Left colon (tissue), 2 donors: ENCODE measurements at regions of chr2 and their contacts with region 1.

Region 1: DNA sequence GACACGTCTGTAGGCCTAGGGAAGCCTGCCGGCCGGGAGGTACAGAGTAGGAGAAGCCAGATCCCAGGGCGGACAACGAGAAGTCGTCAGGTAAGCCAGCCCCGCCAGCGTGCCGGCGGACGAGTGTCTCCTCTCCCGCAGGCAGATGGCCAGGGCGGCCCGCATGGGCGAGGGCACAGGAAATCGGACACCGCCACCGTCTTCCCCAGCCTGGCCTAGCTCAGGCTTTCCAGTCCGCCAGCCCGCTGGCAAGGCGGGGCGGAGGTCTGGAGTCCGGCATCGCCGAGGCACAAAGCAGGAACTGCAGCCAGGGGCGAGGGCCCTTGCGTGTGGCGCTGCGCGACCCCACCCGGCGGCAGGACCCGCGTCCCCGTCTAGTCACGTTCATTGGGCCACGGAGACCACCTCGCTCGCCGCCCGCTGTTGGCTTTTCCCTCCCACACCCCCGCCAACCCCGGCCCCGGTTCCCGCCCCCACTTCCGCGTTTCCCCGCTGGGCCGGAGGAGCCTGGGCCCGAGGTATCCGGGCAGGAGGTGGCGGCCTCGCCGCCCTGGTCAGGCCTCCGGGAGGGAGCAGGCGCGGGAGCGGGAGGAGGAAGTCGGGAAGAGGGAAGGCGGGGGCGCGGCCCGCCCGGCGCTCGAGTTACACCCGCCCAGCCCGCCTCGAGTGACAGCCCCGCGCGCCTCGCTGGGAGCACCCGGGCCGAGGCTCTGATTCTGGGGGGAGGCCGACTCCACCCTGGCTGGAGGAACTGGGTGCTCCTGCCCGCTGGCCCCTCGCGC is at the start of gene GPD2:
- DNase-seq: peak; percentile 93
- ATAC-seq: peak; percentile 92
- total RNA-seq, gene GPD2: 79.9 to 80.0 TPM

Region 2: GRCh38 chr2:155010925-155011324 is 1425.0 kb before region 1 on chr2:
- intact Hi-C with region 1: no loop called
- DNase-seq: no peak
- ATAC-seq: no peak

Region 3: GRCh38 chr2:156332534-156333273 is 103.2 kb before region 1 on chr2 and contains the start of gene NR4A2:
- intact Hi-C with region 1: loop called in 1 of 2 experiments (anchors 10 kb)
- DNase-seq: peak; percentile 92 to 95
- ATAC-seq: peak; percentile 78
- total RNA-seq, gene NR4A2: 3.4 to 9.7 TPM

Region 4: GRCh38 chr2:156400706-156401678 is 34.9 kb before region 1 on chr2:
- intact Hi-C with region 1: loop called in 1 of 2 experiments (anchors 5 kb)
- DNase-seq: peak; percentile 41 to 75
- ATAC-seq: peak; percentile 75